Cardiac septum (tissue), 1 donor: ENCODE measurements at regions of chr20 and their contacts with region 1.

Region 1: GRCh38 chr20:19692685-19693119 is 65.4 kb upstream of the RIN2 start:
- DNase-seq: peak; percentile 81

Region 2: GRCh38 chr20:19757487-19758132 is 64.9 kb after region 1 on chr20:
- intact Hi-C with region 1: loop called (anchors 5 kb)
- DNase-seq: peak; percentile 94

Region 3: GRCh38 chr20:19802492-19803158 is 109.9 kb after region 1 on chr20:
- intact Hi-C with region 1: loop called (anchors 5 kb)
- DNase-seq: no peak

Region 4: GRCh38 chr20:19995220-19995863 is 302.6 kb after region 1 on chr20:
- intact Hi-C with region 1: loop called (anchors 5 kb)
- DNase-seq: no peak